ENCODE measurements at regions of chr7 and their contacts with region 1.

Region 1: DNA sequence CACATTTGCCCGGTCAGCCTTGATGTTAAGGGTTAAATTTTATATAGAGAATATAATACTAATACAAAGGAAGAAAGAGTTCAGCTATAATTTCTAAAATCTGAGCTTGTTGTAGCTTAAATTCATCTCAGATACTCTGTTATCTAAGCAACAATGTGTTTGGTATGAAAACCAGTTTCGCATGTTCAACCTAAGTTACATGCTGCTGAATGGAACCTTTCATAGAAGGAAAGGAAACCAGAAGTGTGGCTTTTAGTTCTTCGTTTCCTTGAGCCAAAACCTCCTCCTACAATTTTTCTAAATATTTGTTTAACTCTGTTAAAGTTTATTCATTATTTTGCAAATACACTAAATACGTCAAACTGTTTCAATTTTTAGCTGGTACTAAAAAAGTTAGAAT is 18.5 kb downstream of the AGR2 start:
- DNase-seq: no peak
- H3K4me3 ChIP-seq: no peak overlapping the region
- H3K27ac ChIP-seq: no peak overlapping the region
- H3K4me1 ChIP-seq: no peaks in the 10 kb centered on the region
- H3K27me3 ChIP-seq: no peaks in the 10 kb centered on the region
- CTCF ChIP-seq: no peak
- POLR2A ChIP-seq: no peak

Region 2: GRCh38 chr7:16619979-16620408 is 166.3 kb before region 1 on chr7:
- intact Hi-C with region 1: no loop called
- DNase-seq: no peak
- H3K4me3 ChIP-seq: no peak overlapping the region
- H3K27ac ChIP-seq: no peak overlapping the region
- H3K4me1 ChIP-seq: no peaks in the 10 kb centered on the region
- H3K27me3 ChIP-seq: no peaks in the 10 kb centered on the region
- CTCF ChIP-seq: no peak
- POLR2A ChIP-seq: no peak

Region 3: DNA sequence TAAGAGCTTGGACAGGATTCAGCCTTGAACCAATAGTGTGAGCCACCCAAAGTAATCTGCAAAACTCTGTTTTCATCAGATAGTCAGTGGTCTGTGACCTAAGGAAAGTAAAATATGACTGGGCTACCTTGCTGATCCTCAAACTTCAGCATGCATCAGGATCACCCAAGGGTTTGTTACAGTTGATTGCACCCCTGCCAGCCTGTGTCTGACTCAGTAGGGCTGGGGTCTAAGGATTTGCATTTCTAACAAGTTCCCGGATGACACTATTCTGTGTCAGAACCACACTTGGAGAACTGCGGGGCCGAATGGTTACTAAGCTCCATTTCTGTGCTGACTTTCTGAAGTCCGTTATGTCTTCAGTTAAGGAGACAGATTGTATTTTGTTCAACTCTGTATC is 73.3 kb before region 1 on chr7:
- intact Hi-C with region 1: loop called in 1 of 2 experiments (anchors 10 kb)
- DNase-seq: no peak
- H3K4me3 ChIP-seq: no peak overlapping the region
- H3K27ac ChIP-seq: no peak overlapping the region
- H3K4me1 ChIP-seq: no peaks in the 10 kb centered on the region
- H3K27me3 ChIP-seq: no peaks in the 10 kb centered on the region
- CTCF ChIP-seq: no peak
- POLR2A ChIP-seq: no peak

Region 4: DNA sequence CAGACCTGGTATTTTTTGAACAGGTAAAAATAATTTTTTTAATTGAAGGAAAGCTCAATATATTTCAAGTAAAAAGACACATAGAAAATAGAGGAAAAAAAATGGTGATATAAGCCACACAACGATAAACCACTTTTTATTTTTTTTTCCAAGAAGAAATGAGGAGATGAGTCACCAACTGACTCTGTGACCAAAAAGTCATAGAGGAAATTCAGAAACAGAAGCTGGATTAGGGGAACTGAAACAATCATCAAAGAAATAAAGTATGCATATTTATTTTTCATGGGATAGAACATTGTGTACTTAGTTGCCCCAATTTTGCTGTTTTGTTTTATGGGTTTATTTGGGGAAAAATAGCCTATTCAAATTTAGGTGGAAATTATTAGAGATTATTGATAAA is 272.3 kb after region 1 on chr7:
- intact Hi-C with region 1: no loop called
- DNase-seq: no peak
- H3K4me3 ChIP-seq: no peak overlapping the region
- H3K27ac ChIP-seq: no peak overlapping the region
- H3K4me1 ChIP-seq: no peaks in the 10 kb centered on the region
- H3K27me3 ChIP-seq: no peaks in the 10 kb centered on the region
- CTCF ChIP-seq: no peak
- POLR2A ChIP-seq: no peak